Thyroid gland (tissue), 4 donors: ENCODE measurements at regions of chr17 and their contacts with region 1.

Region 1: DNA sequence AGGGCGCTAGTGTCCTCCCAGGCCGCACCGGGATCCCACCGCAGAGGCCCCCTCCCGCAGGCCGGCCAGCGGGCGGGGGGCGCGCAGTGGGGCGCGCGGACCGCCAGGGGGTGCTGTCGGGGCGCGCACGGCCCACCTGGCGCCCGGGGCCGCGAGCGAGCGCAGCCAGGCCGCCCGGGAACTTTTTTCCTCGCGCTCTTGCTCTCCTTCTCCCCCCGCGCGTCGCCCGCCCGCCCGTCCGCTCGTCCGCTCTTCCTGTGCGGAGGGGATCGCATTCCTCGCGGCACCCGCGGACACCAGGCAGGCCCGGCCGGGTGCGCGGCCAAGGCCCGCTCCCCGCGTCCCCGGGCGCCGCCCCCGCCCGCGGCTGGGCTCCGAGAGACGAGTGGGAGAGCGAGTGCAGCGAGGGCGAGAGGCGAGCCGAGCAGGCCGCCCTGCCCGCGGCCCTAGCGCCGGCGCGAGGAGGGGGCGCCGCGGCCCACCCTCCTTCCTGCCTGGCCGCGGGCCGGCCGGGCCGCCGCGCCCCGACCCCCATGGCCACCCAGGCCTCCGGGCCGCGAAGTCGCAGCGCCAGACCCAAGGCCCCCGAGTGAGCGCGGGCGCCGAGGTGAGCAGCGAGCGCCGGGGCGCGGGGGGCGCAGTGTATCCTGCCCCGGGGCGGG is at the start of gene RAI1:
- DNase-seq: peak; percentile 83 to 84
- H3K4me3 ChIP-seq: peak within 1 kb of the TSS; percentile 31 to 79 (median 75)
- H3K27ac ChIP-seq: peak within 1 kb of the TSS; percentile 70 to 94 (median 90)
- H3K4me1 ChIP-seq: peaks cover 27 to 52% of the 10 kb centered on the region in 2 donors
- H3K27me3 ChIP-seq: no peaks in the 10 kb centered on the region
- CTCF ChIP-seq: peak in 3 of 6 experiments; percentile 96 to 98 (median 97)
- POLR2A ChIP-seq: peak in 1 of 2 donors; percentile 65
- total RNA-seq, gene RAI1: 19.1 to 52.3 (median 34.1) TPM

Region 2: DNA sequence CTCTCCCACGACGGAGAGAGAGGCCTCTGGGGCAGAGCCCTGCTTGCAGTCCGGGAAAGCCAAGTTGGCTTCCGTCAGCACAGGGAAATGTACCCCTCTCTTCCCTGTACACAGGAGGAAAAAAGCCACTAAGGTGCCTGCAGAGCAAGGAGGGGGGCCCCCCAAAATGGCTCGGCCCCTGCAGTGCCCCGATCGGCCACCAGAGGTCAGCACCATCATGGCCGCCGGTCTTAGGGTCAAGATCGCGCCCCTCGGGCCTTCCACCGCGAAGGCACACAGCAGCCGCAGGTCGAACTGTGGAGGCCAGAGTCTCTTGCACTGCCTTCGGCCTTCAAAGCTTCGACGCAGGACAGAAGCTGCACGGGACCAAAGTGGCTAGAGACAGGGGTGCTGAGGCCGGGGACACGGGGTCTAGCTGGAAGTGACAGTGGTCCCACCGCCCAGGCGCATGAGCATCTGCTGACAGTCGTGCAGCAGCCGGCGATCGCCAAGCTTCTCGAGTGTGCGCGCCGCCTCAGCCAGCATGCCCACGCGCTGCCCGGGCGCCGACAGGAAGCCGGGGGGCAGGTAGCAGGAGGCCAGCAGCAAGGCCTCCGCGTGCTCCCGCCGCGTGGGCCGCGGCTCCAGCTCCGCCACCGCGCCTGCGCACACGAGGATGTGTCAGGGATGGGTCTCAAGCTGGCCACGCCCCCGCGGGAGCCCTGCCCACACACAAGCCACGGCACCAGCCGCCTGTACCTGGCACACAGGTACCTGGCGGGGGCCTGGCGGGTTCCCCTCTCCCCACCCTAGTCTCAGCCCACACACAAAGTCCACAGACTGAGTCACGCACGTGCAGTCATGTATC is 131.1 kb after region 1 on chr17:
- intact Hi-C with region 1: loop called (anchors 5 kb)
- DNase-seq: peak; percentile 70 to 72
- H3K4me3 ChIP-seq: no peak overlapping the region
- H3K27ac ChIP-seq: peak overlapping the region in 2 of 3 donors; percentile 8 to 11
- H3K4me1 ChIP-seq: peaks cover 32 to 58% of the 10 kb centered on the region in 2 donors
- H3K27me3 ChIP-seq: no peaks in the 10 kb centered on the region
- CTCF ChIP-seq: peak; percentile 97 to 100 (median 98)
- POLR2A ChIP-seq: no peak

Region 3: GRCh38 chr17:17859909-17860765 is 178.8 kb after region 1 on chr17:
- intact Hi-C with region 1: loop called (anchors 10 kb)
- DNase-seq: peak; percentile 76 to 84
- H3K4me3 ChIP-seq: no peak overlapping the region
- H3K27ac ChIP-seq: peak overlapping the region in 2 of 3 donors; percentile 46 to 49
- H3K4me1 ChIP-seq: peaks cover 32 to 44% of the 10 kb centered on the region in 2 donors
- H3K27me3 ChIP-seq: no peaks in the 10 kb centered on the region
- CTCF ChIP-seq: peak; percentile 92 to 99 (median 96)
- POLR2A ChIP-seq: no peak

Region 4: GRCh38 chr17:18033442-18034099 is 352.3 kb after region 1 on chr17:
- intact Hi-C with region 1: loop called (anchors 5 kb)
- DNase-seq: peak; percentile 46 to 56
- H3K4me3 ChIP-seq: no peak overlapping the region
- H3K27ac ChIP-seq: no peak overlapping the region
- H3K4me1 ChIP-seq: peaks cover 9 to 11% of the 10 kb centered on the region in 2 donors
- H3K27me3 ChIP-seq: no peaks in the 10 kb centered on the region
- CTCF ChIP-seq: peak in 4 of 6 experiments; percentile 59 to 76 (median 68)
- POLR2A ChIP-seq: no peak